ENCODE measurements at regions of chr3 and their contacts with region 1.

Region 1: DNA sequence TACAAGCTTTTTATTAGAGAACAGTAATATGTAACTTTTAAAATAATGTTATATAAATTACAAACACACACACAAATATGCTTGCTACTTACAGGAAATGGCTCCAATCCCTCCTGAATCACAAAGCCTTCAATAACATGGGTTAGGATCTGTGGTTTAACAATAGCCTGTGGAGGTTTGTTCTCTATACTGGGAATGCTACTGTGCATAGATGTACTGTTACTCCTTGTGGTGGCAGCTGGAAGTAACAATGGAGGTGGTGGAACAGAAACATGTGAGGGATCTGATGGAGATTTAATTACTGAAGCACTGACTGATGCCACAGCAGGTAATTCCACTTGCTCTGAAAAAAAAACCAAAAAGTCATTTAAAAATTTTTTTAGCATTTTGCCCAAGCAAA is 64.4 kb downstream of the PHC3 start:
- DNase-seq: no peak
- ATAC-seq: no peak
- H3K4me3 ChIP-seq: no peak overlapping the region
- H3K4me3 Mint-ChIP-seq: no peak overlapping the region
- H3K27ac ChIP-seq: no peak overlapping the region
- H3K27ac Mint-ChIP-seq: peak overlapping the region in 2 of 9 donors; percentile 22 to 66
- H3K4me1 ChIP-seq: no peaks in the 10 kb centered on the region
- H3K4me1 Mint-ChIP-seq: peaks cover 0 to 26% (median 8%) of the 10 kb centered on the region in 7 donors
- H3K27me3 ChIP-seq: no peaks in the 10 kb centered on the region
- H3K27me3 Mint-ChIP-seq: no peaks in the 10 kb centered on the region

Region 2: GRCh38 chr3:170055209-170055608 is 61.9 kb before region 1 on chr3:
- CTCF ChIA-PET with region 1: no interaction called
- POLR2A ChIA-PET with region 1: no interaction called
- intact Hi-C with region 1: no loop called
- DNase-seq: no peak
- ATAC-seq: no peak
- H3K4me3 ChIP-seq: no peak overlapping the region
- H3K4me3 Mint-ChIP-seq: no peak overlapping the region
- H3K27ac ChIP-seq: no peak overlapping the region
- H3K27ac Mint-ChIP-seq: peak overlapping the region in 2 of 9 donors; percentile 29 to 42
- H3K4me1 ChIP-seq: peaks cover 0 to 7% of the 10 kb centered on the region in 2 donors
- H3K4me1 Mint-ChIP-seq: peaks cover 6 to 37% (median 23%) of the 10 kb centered on the region in 7 donors
- H3K27me3 ChIP-seq: no peaks in the 10 kb centered on the region
- H3K27me3 Mint-ChIP-seq: no peaks in the 10 kb centered on the region

Region 3: GRCh38 chr3:170098753-170099152 is 18.4 kb before region 1 on chr3:
- CTCF ChIA-PET with region 1: no interaction called
- POLR2A ChIA-PET with region 1: interaction called, 3 read pairs
- intact Hi-C with region 1: loop called in 1 of 2 experiments (anchors 2 kb)
- DNase-seq: no peak
- ATAC-seq: no peak
- H3K4me3 ChIP-seq: no peak overlapping the region
- H3K4me3 Mint-ChIP-seq: no peak overlapping the region
- H3K27ac ChIP-seq: no peak overlapping the region
- H3K27ac Mint-ChIP-seq: peak overlapping the region in 6 of 9 donors; percentile 34 to 67 (median 54)
- H3K4me1 ChIP-seq: no peaks in the 10 kb centered on the region
- H3K4me1 Mint-ChIP-seq: peaks cover 2 to 34% (median 18%) of the 10 kb centered on the region in 7 donors
- H3K27me3 ChIP-seq: no peaks in the 10 kb centered on the region
- H3K27me3 Mint-ChIP-seq: no peaks in the 10 kb centered on the region

Region 4: GRCh38 chr3:170270282-170270881 is 153.2 kb after region 1 on chr3:
- CTCF ChIA-PET with region 1: no interaction called
- POLR2A ChIA-PET with region 1: no interaction called
- intact Hi-C with region 1: no loop called
- DNase-seq: no peak
- ATAC-seq: no peak
- H3K4me3 ChIP-seq: no peak overlapping the region
- H3K4me3 Mint-ChIP-seq: no peak overlapping the region
- H3K27ac ChIP-seq: no peak overlapping the region
- H3K27ac Mint-ChIP-seq: no peak overlapping the region
- H3K4me1 ChIP-seq: no peaks in the 10 kb centered on the region
- H3K4me1 Mint-ChIP-seq: no peaks in the 10 kb centered on the region
- H3K27me3 ChIP-seq: no peaks in the 10 kb centered on the region
- H3K27me3 Mint-ChIP-seq: no peaks in the 10 kb centered on the region

Measured in naive thymus-derived CD4-positive, alpha-beta T cell (primary cell).